ENCODE measurements at regions of chr14 and their contacts with region 1.

Region 1: DNA sequence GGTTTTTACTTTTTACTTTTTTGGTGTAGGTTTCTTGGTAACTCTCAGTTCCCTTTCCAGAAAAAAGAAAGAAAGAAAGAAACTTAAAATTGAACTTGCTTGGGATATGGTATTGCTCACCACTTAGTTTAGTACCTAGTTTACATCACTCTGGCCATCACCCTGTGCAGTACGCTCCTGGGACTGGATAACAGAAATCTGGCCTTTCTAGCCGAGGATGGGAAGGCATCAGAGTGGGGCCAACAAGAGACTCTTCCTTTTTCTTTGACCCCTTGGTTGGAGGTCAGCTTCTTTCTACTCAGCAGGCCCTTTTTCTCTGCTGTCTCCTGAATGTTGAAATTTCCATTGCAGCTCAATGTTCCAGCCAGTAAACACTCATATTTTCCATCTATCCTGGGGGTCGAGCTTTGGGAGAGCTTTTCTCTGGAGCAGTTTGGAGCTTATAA is 156.6 kb downstream of the TGFB3 start:
- DNase-seq: no peak
- ATAC-seq: peak; percentile 38

Region 2: GRCh38 chr14:75865531-75865930 is 40.4 kb after region 1 on chr14:
- intact Hi-C with region 1: loop called (anchors 5 kb)
- DNase-seq: no peak
- ATAC-seq: no peak

Region 3: DNA sequence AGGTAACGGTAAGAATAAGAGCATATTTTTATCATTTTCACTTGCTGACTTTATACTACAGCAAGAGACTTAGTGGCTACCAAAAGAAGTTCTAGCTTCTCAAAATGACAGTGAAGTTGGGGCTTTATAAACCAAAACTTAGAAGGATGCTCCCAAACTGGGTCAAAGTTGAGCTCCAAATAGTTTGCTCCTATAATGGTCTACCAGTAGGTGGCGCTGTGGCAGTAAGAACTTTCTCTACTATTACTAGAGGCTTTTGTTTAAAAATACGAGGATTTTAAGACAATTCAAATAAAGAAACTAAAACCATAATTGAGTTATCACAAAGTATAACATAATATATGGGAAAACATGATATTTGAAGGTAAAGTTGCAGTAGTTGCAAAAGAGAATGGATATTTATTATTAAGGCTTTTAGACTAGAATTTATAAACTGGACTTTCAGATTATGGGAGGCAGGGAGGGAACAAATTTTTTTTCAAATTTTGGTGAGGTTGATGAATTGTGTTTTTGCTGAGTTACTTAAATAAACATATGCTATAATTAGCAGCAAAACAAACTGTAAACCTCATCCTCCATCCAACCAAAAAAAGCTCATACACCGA is 81.6 kb after region 1 on chr14:
- intact Hi-C with region 1: no loop called
- DNase-seq: no peak
- ATAC-seq: peak; percentile 55